ENCODE measurements at regions of chr21 and their contacts with region 1.

Region 1: DNA sequence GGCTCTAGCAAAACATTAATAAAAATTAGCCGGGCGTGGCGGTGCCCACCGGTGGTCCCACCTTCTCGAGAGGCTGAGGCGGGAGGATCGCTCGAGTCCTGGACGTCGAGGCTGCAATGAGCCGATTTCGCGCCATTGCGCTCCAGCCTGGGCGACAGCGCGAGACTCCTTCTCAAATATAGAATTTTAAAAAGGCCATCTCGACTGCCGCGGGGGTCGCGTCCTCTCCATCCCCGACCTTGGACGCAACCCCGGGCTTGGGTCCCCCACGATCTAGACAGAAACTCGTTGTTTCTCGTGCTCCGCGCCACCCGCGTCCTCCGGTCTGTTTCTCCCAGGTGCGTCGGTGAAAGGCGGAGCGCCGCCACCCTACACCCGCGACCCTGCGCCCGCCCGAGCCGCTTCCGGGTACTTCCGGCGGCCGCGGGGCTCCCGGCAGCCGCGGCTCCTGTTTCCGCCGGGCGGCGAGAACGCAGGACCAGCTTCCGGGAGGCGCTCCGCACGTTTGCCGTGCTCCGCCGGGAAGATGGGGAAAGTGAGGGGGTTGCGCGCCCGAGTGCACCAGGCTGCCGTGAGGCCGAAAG is at the start of gene SLX9:
- DNase-seq: peak; percentile 98

Region 2: GRCh38 chr21:44949779-44950198 is 10.2 kb after region 1 on chr21:
- CTCF ChIA-PET with region 1: no interaction called
- POLR2A ChIA-PET with region 1: interaction called, 12 read pairs
- DNase-seq: peak; percentile 86

Region 3: GRCh38 chr21:45074048-45074817 is 134.6 kb after region 1 on chr21 and contains the start of gene ADARB1:
- CTCF ChIA-PET with region 1: no interaction called
- POLR2A ChIA-PET with region 1: interaction called, 10 read pairs
- DNase-seq: peak; percentile 96

Region 4: DNA sequence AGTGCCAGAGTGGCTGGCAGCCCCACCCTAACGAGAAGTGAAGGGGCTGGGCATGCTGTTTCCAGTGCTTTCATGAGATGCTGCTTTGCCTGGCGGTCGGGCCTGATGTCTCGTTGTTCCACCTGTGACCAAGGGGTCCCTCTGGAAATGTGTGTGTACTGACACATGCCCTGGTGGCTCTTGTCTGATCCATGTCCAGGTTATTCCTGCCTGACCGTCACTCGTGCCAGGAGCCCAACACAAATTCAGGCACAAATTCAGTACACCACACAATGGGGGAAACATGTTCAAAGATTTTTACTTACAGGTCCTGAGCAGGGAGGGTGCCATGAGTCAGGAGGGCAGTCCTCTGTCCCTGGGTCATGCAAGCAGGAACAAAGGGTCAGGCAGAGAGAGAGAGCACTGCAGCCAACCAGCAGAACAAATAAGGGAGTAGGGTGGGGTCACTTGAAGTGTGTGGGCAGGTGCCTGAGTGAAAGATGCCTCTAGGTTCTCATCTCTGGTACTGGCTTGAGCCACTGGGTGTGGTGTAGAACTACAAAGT is 211.1 kb after region 1 on chr21:
- CTCF ChIA-PET with region 1: no interaction called
- POLR2A ChIA-PET with region 1: no interaction called
- DNase-seq: no peak